ENCODE measurements at regions of chr12 and their contacts with region 1.

Region 1: DNA sequence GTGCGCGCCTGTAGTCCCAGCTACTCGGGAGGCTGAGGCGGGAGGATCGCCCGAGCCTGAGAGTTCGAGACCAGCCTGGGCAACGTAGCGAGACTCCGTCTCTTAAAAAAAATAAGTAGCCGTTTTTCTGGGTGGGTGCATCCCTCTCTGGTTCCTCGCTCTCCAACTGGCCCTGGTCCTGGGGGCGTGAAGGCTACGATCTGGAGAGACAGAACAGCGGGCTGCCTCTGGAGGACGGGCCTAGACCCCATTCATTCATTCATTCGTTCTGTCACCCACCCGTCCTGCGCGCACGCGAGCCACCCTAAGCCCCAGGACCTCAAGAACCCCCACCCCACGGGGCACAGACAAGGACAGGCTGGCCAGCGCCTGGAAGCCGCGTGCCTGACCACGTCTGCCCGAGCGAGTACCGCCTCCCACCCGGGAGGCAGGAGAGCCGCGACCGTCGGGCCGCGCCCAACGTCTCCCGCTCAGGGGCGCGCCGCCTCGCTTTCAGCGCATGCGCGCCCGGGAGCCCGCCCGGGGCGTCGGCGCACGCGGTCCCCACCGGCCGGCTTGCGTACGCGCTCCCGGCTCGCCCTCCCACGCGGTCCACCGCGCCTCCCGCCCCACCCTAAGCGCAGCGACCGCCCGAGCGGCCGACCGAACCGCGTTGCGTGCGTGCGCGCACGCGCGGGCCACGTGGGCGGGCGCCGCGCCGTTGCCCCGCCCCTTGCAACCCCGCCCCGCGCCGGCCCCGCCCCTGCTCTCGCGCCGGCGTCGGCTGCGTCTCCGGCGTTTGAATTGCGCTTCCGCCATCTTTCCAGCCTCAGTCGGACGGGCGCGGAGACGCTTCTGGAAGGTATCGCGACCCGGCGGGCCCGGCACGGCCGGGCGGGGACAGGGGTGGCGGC is at the start of gene RAN:
- DNase-seq: peak; percentile 96
- H3K4me3 ChIP-seq: peak within 1 kb of the TSS; percentile 66
- H3K27ac ChIP-seq: peak within 1 kb of the TSS; percentile 96
- H3K4me1 ChIP-seq: peaks cover 19% of the 10 kb centered on the region
- H3K27me3 ChIP-seq: no peaks in the 10 kb centered on the region
- CTCF ChIP-seq: no peak
- total RNA-seq, gene RAN: 1,775 and 1,894 TPM in 2 replicates

Region 2: DNA sequence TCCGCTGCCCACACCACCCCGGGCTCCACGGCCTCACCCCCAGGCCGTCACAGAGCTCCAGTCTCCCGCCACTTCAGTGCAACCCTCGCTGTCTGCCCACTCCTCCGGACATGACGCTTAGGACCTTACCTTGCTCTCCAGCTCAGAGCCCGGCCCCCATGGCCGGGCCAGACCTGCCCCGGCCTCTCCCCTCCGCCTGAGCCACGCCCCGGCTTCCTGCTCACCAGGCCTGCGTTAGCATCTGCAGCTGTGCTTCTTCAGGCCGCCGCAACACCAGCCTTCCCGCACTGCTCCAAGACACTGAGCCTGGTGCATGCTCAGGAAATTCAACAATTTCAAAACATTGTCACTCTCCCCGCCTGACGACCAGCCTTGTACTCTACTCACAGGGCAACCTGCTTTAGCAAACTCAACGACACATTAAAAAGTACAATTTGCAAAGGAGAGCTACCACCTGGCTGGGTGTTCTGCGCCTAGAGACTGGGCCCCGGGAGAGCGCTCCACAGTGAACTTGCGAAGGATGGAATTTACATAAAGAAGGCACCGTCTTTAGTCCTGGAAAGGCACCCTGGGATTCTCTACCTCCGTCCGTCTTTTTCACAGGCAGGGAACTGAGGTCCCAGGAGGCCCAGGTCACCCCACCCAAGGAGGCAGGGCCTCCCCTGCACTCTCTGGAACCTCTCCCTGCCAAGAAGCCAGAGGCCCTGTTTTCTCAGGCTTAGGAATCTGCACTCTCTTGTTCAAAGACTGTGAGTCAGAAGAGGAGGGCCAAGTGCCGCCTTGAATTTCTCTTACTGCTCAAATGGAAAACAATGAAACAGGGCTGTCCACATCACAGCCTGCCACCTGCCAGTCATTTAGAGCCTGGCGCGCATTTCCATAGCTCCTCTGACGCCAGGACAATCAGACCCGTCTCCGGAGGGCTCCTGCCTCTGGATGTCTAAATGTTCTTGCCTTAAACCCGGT is 83.8 kb before region 1 on chr12:
- CTCF ChIA-PET with region 1: no interaction called
- POLR2A ChIA-PET with region 1: no interaction called
- intact Hi-C with region 1: no loop called
- DNase-seq: no peak
- H3K4me3 ChIP-seq: no peak overlapping the region
- H3K27ac ChIP-seq: no peak overlapping the region
- H3K4me1 ChIP-seq: no peaks in the 10 kb centered on the region
- H3K27me3 ChIP-seq: no peaks in the 10 kb centered on the region
- CTCF ChIP-seq: no peak

Region 3: GRCh38 chr12:130838951-130839769 is 32.4 kb before region 1 on chr12 and contains the start of gene STX2:
- CTCF ChIA-PET with region 1: no interaction called
- POLR2A ChIA-PET with region 1: interaction called, 5 read pairs
- intact Hi-C with region 1: loop called (anchors 5 kb)
- DNase-seq: peak; percentile 86
- H3K4me3 ChIP-seq: peak within 1 kb of the TSS; percentile 79
- H3K27ac ChIP-seq: peak within 1 kb of the TSS; percentile 73
- H3K4me1 ChIP-seq: peaks cover 18% of the 10 kb centered on the region
- H3K27me3 ChIP-seq: no peaks in the 10 kb centered on the region
- CTCF ChIP-seq: peak; percentile 45
- total RNA-seq, gene STX2: 37.8 and 38.1 TPM in 2 replicates

Region 4: GRCh38 chr12:130859161-130859560 is 12.4 kb before region 1 on chr12:
- CTCF ChIA-PET with region 1: no interaction called
- POLR2A ChIA-PET with region 1: no interaction called
- intact Hi-C with region 1: no loop called
- DNase-seq: no peak
- H3K4me3 ChIP-seq: no peak overlapping the region
- H3K27ac ChIP-seq: no peak overlapping the region
- H3K4me1 ChIP-seq: no peaks in the 10 kb centered on the region
- H3K27me3 ChIP-seq: peaks cover 6% of the 10 kb centered on the region
- CTCF ChIP-seq: no peak

Region 5: GRCh38 chr12:131564845-131565244 is 693.3 kb after region 1 on chr12:
- CTCF ChIA-PET with region 1: no interaction called
- POLR2A ChIA-PET with region 1: no interaction called
- intact Hi-C with region 1: no loop called
- DNase-seq: no peak
- H3K4me3 ChIP-seq: no peak overlapping the region
- H3K27ac ChIP-seq: no peak overlapping the region
- H3K4me1 ChIP-seq: no peaks in the 10 kb centered on the region
- H3K27me3 ChIP-seq: peaks cover 44% of the 10 kb centered on the region
- CTCF ChIP-seq: no peak

Measured in A673 (cell line).